ENCODE measurements at regions of chr19 and their contacts with region 1.

Region 1: GRCh38 chr19:39474139-39474622 is 6.5 kb upstream of the TIMM50 start:
- H3K4me3 ChIP-seq: no peak overlapping the region
- H3K27ac ChIP-seq: no peak overlapping the region
- H3K4me1 ChIP-seq: no peaks in the 10 kb centered on the region
- CTCF ChIP-seq: peak; percentile 99

Region 2: GRCh38 chr19:39397360-39398296 is 76.6 kb before region 1 on chr19:
- CTCF ChIA-PET with region 1: interaction called, 10 read pairs
- POLR2A ChIA-PET with region 1: no interaction called
- H3K4me3 ChIP-seq: no peak overlapping the region
- H3K27ac ChIP-seq: peak overlapping the region; percentile 3; the same call in 1 of the 2 replicates
- H3K4me1 ChIP-seq: peaks cover 10% of the 10 kb centered on the region
- CTCF ChIP-seq: peak; percentile 100

Region 3: DNA sequence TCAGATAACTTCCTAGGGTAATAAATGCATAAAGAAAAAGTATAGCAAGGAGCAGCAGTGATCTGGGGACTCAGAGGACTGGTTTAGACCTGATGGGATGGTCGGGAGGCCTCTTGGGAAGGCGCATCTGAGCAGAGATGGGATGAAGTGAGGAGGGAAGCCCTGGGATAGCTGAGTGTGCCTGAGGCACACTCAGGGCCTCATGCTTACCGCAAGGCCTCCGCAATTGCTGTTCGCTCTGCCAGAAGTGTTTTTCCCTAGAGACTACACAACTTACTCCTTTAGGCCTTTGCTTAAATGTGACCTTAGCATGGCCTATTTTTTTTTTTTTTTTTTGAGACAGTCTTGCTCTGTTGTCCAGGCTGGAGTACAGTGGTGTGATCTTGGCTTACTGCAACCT is 20.5 kb after region 1 on chr19:
- CTCF ChIA-PET with region 1: interaction called, 47 read pairs
- POLR2A ChIA-PET with region 1: interaction called, 3 read pairs
- H3K4me3 ChIP-seq: no peak overlapping the region
- H3K27ac ChIP-seq: peak overlapping the region; percentile 56
- H3K4me1 ChIP-seq: peaks cover 16% of the 10 kb centered on the region
- CTCF ChIP-seq: no peak

Region 4: DNA sequence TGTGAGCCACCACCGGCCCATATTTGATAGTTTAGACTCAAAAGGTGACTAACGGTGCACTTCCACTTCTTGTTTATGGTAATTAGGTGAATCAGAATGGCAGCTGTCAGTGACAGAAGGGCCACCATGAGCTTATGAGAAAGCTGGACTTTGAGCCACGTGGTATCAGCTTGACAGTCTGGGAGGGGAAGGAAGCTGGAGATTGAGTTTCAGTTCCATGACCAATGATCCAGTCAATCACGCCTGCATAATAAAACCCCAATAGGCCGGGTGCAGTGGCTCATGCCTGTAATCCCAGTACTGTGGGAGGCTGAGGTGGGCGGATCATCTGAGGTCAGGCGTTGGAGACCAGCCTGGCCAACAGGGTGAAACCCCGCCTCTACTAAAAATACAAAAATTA is 50.3 kb after region 1 on chr19:
- CTCF ChIA-PET with region 1: interaction called, 174 read pairs
- POLR2A ChIA-PET with region 1: no interaction called
- H3K4me3 ChIP-seq: no peak overlapping the region
- H3K27ac ChIP-seq: no peak overlapping the region
- H3K4me1 ChIP-seq: 0 out of 2 replicates have a peak, but pooled peaks cover 4% of the 10 kb centered on the region
- CTCF ChIP-seq: no peak

Region 5: DNA sequence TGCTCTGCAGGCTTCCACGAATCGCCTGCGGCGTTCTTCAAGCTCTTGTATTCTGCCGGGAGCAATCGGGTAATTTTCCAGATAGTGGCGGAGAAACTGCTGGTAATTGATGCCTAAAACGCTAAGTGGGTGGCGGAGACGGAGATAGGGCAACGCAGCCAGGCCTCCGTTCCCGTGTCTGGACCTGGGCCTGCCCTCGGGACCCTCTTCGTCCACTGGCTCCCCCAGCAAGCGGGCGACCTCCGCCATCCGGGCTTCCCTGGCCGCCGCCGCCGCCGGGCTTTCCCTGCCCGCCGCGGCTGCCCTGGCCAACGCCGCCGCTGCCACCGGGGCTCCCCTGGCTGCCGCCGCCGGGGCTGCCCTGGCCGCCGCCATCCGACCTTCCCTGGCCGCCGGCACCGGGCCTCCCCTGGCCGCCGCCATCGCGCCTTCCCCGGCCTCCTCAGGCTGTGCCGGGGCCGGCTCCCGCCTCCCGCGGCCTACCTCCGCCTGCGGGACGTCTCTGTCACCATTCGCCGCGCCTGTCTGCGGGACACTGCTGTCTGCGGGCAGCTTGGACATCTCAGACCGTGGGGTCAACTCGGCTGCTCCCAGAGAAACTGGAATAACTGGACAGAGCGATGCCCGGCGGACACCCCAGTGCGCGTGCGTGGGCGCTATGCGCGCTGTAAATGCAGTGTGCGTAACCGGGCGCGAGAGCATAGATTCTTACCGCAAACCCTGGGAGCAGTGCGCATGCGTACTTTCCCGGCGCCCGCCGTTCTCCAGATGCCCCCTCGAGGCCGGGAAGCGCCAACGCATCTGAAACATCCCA is 65.5 kb after region 1 on chr19 and contains the start of gene EID2:
- CTCF ChIA-PET with region 1: interaction called, 174 read pairs
- POLR2A ChIA-PET with region 1: no interaction called
- H3K4me3 ChIP-seq: peak within 1 kb of the TSS; percentile 83
- H3K27ac ChIP-seq: peak within 1 kb of the TSS; percentile 97
- H3K4me1 ChIP-seq: peaks cover 16% of the 10 kb centered on the region
- CTCF ChIP-seq: peak; percentile 97